Activated CD4-positive, alpha-beta T cell treated with anti-CD3 and anti-CD28 coated beads for 36 hours (primary cell): ENCODE measurements at regions of chr1 and their contacts with region 1.

Region 1: DNA sequence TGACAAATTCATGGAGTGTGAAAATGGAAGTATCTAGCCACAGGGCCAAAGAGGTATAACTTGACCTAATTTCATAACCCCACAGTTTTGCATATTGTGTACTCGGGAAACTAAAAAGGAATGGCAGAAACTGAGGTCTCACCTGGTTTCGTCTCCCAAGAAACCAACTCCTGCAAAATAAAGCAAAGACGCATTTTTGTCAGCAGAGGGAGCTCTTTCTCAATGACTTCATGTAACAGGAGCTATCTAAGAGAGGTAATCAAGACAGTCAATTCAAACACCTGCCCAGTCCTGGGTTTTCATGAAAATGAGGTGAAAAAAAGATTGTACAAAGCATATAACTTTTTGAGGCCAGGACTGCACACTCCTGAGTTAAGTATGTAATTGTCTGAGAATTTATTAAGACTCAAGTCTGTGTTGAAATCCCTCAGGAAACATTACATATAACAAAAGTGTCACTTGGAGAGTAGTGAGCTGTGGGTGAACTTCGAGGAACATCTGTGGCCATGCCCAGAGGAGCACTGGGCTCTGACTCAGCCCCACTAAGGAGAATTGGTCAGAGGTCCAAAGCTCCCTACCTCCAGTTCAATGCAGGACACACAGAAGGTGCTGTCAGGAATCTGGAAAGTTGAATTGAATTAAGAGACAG is 17.6 kb downstream of the FCRL4 start:
- DNase-seq: peak; percentile 13
- ATAC-seq: no peak
- H3K4me3 Mint-ChIP-seq: no peak overlapping the region
- H3K27ac Mint-ChIP-seq: no peak overlapping the region
- H3K4me1 Mint-ChIP-seq: no peaks in the 10 kb centered on the region
- H3K27me3 Mint-ChIP-seq: peaks cover 9% of the 10 kb centered on the region

Region 2: GRCh38 chr1:157595356-157595755 is 15.1 kb after region 1 on chr1:
- CTCF ChIA-PET with region 1: interaction called, 15 read pairs
- POLR2A ChIA-PET with region 1: no interaction called
- intact Hi-C with region 1: no loop called
- DNase-seq: no peak
- ATAC-seq: no peak
- H3K4me3 Mint-ChIP-seq: no peak overlapping the region
- H3K27ac Mint-ChIP-seq: no peak overlapping the region
- H3K4me1 Mint-ChIP-seq: no peaks in the 10 kb centered on the region
- H3K27me3 Mint-ChIP-seq: peaks cover 4% of the 10 kb centered on the region

Region 3: DNA sequence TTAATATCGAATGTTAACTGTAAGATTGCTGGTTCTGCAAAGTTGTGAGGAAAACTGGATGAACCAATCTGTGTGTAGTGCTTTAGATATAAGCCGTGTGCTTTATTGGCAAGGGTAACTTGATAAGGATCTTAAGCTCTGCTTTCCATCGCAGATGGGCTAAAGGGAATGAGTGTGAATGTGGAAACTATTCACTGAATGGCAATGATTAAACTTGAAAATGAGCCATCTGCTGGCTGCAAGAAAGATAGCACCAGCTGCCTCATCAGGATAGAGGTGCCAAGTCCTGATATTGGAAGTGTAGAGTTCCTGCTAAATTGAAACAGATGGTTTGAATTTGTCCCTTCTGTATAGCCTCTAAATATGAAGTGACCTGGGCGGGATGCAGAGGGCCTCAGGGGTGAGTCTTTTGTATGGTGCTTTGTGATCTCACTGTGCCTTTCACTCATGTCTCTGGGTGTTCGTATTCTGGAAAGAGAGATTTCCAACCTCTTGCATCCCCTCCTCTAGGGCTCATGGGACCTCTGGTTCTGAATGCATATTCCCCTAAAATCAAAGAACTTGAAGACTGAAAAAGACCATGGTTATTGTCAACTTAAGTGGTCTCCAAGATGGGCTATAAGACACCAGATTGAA is 111.1 kb after region 1 on chr1:
- CTCF ChIA-PET with region 1: interaction called, 22 read pairs
- POLR2A ChIA-PET with region 1: no interaction called
- intact Hi-C with region 1: loop called (anchors 1 to 5 kb)
- DNase-seq: no peak
- ATAC-seq: no peak
- H3K4me3 Mint-ChIP-seq: no peak overlapping the region
- H3K27ac Mint-ChIP-seq: no peak overlapping the region
- H3K4me1 Mint-ChIP-seq: no peaks in the 10 kb centered on the region
- H3K27me3 Mint-ChIP-seq: peaks cover 3% of the 10 kb centered on the region

Region 4: DNA sequence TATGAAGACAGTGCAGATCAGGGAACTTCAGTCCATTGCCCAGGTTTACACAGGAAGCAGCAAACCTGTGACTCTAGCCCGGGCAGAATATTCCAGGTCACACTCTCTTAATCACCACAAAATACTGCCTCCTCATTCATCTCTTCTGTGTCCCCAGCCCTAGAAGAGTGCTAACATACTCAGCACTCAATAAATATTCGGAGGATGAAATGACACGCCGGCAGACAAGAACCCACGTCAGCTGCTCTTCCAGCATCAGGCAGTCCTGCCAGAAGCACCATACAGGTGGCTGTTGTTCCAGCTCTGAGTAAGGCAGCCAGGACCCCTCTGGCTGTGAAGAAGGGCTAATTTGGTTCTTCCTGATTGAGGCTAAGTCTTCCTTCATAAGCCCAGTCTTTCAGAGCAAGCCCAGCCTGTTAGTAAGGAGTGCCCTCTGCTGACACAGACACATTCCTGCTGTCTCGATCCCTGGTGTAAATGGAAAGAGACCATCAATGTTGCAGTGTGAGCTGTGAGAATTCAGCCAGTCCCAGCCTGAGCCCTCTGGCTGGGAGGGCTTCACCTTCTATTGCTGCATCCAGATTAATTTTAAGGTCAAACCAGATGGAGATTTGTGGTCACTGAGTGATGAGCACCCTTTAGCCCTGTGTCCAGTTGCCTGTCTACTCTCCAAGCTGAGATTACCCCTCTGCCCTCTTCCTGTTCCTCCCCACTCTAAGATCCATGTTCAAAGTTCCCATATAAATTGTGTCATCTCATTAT is 368.2 kb after region 1 on chr1:
- CTCF ChIA-PET with region 1: no interaction called
- POLR2A ChIA-PET with region 1: no interaction called
- intact Hi-C with region 1: loop called (anchors 1 to 5 kb)
- DNase-seq: peak; percentile 18
- ATAC-seq: no peak
- H3K4me3 Mint-ChIP-seq: no peak overlapping the region
- H3K27ac Mint-ChIP-seq: no peak overlapping the region
- H3K4me1 Mint-ChIP-seq: no peaks in the 10 kb centered on the region
- H3K27me3 Mint-ChIP-seq: peaks cover 14% of the 10 kb centered on the region